Sigmoid colon (tissue), 7 donors: ENCODE measurements at regions of chr4 and their contacts with region 1.

Region 1: DNA sequence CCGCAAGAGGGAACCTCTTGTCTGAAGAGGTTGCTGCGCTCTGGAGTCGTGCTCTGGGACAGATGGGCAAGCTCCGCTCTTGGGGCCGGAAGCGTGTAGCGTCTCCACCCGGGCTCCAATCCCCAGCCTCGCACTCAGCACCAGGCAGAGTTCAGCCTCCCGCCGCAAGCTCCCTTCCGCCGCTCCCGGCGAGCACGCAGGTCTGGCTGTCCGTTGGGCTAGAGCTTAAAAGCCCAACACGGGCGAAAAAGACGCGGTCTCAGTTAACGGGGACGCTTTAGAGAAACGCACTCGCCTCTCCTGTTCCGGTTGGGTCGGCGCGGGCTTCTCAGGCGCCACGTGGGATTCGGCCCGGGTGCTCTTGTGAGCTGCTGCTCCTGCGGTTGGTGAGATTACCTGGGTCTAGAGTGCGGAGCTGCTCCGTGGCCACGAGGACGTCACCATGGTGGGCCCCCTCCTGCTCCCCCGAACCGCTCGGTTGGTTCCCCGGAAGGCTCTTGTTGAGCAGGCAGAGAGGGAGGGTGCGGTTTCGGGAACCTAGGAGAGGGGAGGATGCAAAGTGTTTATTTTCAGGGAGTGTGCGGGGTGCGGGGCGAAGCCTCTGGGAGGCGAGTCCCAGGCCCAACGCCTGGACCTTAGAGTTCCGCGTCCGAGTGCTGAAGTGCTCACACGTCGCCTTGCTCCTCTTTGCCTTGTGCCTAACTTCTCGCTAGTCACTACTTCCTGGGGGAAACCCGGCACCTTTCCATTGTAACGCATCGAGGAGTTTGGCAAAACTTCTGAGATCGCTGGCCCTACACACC is at the start of gene TMA16:
- DNase-seq: peak; percentile 91
- H3K4me3 ChIP-seq: peak within 1 kb of the TSS; percentile 78 to 87 (median 84)
- H3K27ac ChIP-seq: peak within 1 kb of the TSS; percentile 77 to 89 (median 87)
- H3K4me1 ChIP-seq: peaks cover 0 to 24% (median 13%) of the 10 kb centered on the region in 4 donors
- H3K27me3 ChIP-seq: no peaks in the 10 kb centered on the region
- CTCF ChIP-seq: no peak
- EP300 ChIP-seq: no peak
- POLR2A ChIP-seq: peak; percentile 9 to 21
- total RNA-seq, gene TMA16: 12.5 to 28.0 (median 21.9) TPM

Region 2: DNA sequence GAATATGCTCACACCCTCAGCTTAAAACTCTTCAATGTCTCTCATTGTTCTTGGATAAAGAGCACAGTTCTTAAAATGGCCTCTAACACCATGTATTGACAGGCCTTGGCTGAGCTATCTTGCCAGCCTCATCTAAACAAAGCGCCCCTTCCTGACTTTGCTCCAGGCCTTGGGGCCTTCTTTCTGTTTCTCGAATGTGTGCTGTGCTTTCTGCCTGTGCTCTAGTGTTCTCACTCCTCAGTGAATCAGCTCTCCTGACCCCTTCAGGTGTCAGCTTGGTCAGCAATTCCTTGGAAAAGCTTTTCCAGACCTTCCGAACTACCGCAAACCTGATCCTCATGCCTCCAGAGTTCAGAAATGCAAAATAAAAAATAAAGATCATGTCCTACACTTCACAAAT is 984.4 kb before region 1 on chr4:
- intact Hi-C with region 1: no loop called
- DNase-seq: no peak
- H3K4me3 ChIP-seq: no peak overlapping the region
- H3K27ac ChIP-seq: no peak overlapping the region
- H3K4me1 ChIP-seq: no peaks in the 10 kb centered on the region
- H3K27me3 ChIP-seq: no peaks in the 10 kb centered on the region
- CTCF ChIP-seq: no peak
- EP300 ChIP-seq: no peak
- POLR2A ChIP-seq: no peak

Region 3: DNA sequence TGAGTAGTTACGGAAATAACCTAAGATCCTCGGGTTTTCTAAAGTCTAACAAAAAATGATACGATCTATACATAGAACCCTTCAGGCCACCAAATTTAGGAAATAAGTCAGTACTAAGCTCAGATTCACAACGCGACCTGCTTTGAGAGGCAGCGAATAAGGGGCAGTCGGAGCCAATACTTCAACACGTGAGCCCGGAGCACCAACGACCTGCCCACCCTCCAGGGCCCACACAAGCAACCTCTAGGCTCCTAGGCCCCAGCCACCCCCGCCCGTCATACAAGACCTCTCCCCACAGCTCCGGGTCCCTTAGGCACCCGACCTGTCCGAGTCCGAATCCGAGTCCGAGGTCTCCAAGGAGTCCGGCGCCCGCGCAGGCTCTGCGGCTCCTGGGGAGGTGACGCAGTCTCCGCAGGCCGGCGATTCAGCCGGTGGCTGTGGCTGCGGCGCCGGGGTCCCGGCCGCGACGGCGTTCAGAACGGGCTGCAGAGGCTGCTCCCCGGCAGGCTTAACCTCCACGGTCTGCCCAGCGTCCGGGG is 328.5 kb before region 1 on chr4:
- intact Hi-C with region 1: loop called (anchors 10 kb)
- DNase-seq: peak; percentile 79
- H3K4me3 ChIP-seq: peak overlapping the region; percentile 58 to 85 (median 73)
- H3K27ac ChIP-seq: peak overlapping the region; percentile 87 to 91 (median 88)
- H3K4me1 ChIP-seq: peaks cover 0 to 44% (median 19%) of the 10 kb centered on the region in 4 donors
- H3K27me3 ChIP-seq: no peaks in the 10 kb centered on the region
- CTCF ChIP-seq: no peak
- EP300 ChIP-seq: no peak
- POLR2A ChIP-seq: no peak